GM12878 (cell line): ENCODE measurements at regions of chr15 and their contacts with region 1.

Region 1: DNA sequence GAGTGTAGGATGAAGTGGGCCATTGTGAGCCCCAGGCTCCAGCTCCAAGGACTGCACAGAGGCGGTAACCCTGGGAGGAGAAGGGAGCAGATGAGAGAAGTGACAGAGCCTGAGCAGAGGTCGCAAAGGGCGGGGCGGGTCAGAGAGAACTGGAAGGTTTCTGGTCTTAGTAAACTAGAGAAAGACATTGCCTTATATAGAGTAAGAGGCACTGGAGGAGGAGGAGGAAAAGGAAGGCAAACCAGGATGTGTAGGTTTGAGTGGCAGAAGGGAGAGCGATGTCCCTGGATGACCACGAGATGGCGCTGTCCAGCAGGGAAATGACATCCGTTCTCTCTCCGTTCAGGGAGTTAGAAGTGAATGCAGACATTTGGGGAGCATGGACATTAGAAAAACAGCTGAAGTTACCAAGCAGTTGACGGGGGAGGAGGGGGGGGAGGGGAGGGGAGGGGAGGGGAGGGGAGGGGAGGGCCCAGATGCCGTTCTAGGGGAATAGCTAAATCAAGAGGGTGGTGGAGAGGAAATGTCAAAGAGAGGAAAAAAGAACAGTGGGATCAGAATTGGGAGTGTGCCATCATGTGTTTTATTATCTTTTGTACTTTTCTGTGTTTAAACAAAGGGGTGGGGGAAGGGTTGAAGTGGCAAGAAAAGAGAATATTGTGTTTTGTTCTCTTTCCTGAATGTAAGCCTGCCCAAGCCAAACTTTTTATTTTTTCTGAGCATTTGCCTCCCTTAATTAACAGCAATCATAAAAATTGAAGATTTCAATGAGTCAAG is 48.8 kb downstream of the STARD5 start:
- DNase-seq: peak; percentile 82
- ATAC-seq: peak; percentile 99
- H3K4me3 ChIP-seq: no peak overlapping the region
- H3K27ac ChIP-seq: no peak overlapping the region
- H3K4me1 ChIP-seq: 0 out of 2 replicates have a peak, but pooled peaks cover 3% of the 10 kb centered on the region
- H3K27me3 ChIP-seq: no peaks in the 10 kb centered on the region
- CTCF ChIP-seq: peak; percentile 89 to 95 (median 90)
- EP300 ChIP-seq: no peak
- POLR2A ChIP-seq: no peak
- RAD21 ChIP-seq: peak; percentile 100

Region 2: GRCh38 chr15:81286621-81287121 is 11.6 kb after region 1 on chr15:
- CTCF ChIA-PET with region 1: interaction called, 66 read pairs
- POLR2A ChIA-PET with region 1: interaction called, 10 read pairs
- RAD21 ChIA-PET with region 1: interaction called, 73 read pairs
- SMC1A ChIA-PET with region 1: interaction called, 109 read pairs
- in situ Hi-C with region 1: no loop called
- intact Hi-C with region 1: no loop called
- DNase-seq: no peak
- ATAC-seq: peak; percentile 33
- H3K4me3 ChIP-seq: no peak overlapping the region
- H3K27ac ChIP-seq: peak overlapping the region; percentile 29; the same call in 1 of the 2 replicates
- H3K4me1 ChIP-seq: peaks cover 38% of the 10 kb centered on the region
- H3K27me3 ChIP-seq: no peaks in the 10 kb centered on the region
- CTCF ChIP-seq: no peak
- EP300 ChIP-seq: no peak
- POLR2A ChIP-seq: no peak
- RAD21 ChIP-seq: no peak

Region 3: GRCh38 chr15:81311752-81312464 is 36.8 kb after region 1 on chr15:
- CTCF ChIA-PET with region 1: interaction called, 15 read pairs
- POLR2A ChIA-PET with region 1: no interaction called
- RAD21 ChIA-PET with region 1: interaction called, 15 read pairs
- SMC1A ChIA-PET with region 1: interaction called, 12 read pairs
- in situ Hi-C with region 1: no loop called
- intact Hi-C with region 1: no loop called
- DNase-seq: no peak
- ATAC-seq: peak; percentile 74
- H3K4me3 ChIP-seq: no peak overlapping the region
- H3K27ac ChIP-seq: peak overlapping the region; percentile 61
- H3K4me1 ChIP-seq: peaks cover 36% of the 10 kb centered on the region
- H3K27me3 ChIP-seq: no peaks in the 10 kb centered on the region
- CTCF ChIP-seq: no peak
- EP300 ChIP-seq: no peak
- POLR2A ChIP-seq: no peak
- RAD21 ChIP-seq: no peak

Region 4: DNA sequence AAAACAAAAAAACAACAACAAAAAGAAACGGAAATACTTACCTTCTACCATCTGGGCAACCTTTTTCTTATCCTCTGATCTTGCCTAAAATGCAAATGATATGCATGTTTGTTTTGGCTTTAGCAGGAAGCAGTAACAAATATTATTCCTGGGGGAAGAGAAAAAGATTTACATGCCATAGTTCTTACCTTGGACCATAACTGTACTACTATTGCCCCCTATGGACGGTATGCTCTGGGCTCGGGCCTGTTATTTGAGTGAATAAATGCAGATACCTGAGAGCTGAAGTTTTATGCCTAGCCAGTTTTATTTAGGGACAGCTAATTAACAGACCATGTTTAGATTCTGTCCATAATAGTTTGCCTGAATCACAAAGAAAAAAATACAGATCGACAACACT is 61.4 kb after region 1 on chr15:
- CTCF ChIA-PET with region 1: interaction called, 242 read pairs
- POLR2A ChIA-PET with region 1: interaction called, 4 read pairs
- RAD21 ChIA-PET with region 1: interaction called, 137 read pairs
- SMC1A ChIA-PET with region 1: interaction called, 122 read pairs
- in situ Hi-C with region 1: no loop called
- intact Hi-C with region 1: loop called (anchors 1 kb)
- DNase-seq: no peak
- ATAC-seq: peak; percentile 89
- H3K4me3 ChIP-seq: no peak overlapping the region
- H3K27ac ChIP-seq: no peak overlapping the region
- H3K4me1 ChIP-seq: no peaks in the 10 kb centered on the region; the same call in 1 of the 2 replicates
- H3K27me3 ChIP-seq: no peaks in the 10 kb centered on the region
- CTCF ChIP-seq: peak; percentile 57 to 73 (median 66); a peak in 5 of 6 replicates
- EP300 ChIP-seq: no peak
- POLR2A ChIP-seq: no peak
- RAD21 ChIP-seq: peak; percentile 83

Region 5: GRCh38 chr15:81400640-81401236 is 125.6 kb after region 1 on chr15:
- CTCF ChIA-PET with region 1: interaction called, 70 read pairs
- POLR2A ChIA-PET with region 1: no interaction called
- RAD21 ChIA-PET with region 1: interaction called, 32 read pairs
- SMC1A ChIA-PET with region 1: interaction called, 63 read pairs
- in situ Hi-C with region 1: no loop called
- intact Hi-C with region 1: loop called (anchors 1 kb)
- DNase-seq: peak; percentile 23
- ATAC-seq: peak; percentile 73
- H3K4me3 ChIP-seq: no peak overlapping the region
- H3K27ac ChIP-seq: no peak overlapping the region
- H3K4me1 ChIP-seq: no peaks in the 10 kb centered on the region
- H3K27me3 ChIP-seq: no peaks in the 10 kb centered on the region; a peak in 1 of 4 replicates
- CTCF ChIP-seq: peak; percentile 70 to 77 (median 73)
- EP300 ChIP-seq: no peak
- POLR2A ChIP-seq: no peak
- RAD21 ChIP-seq: peak; percentile 91

Region 6: DNA sequence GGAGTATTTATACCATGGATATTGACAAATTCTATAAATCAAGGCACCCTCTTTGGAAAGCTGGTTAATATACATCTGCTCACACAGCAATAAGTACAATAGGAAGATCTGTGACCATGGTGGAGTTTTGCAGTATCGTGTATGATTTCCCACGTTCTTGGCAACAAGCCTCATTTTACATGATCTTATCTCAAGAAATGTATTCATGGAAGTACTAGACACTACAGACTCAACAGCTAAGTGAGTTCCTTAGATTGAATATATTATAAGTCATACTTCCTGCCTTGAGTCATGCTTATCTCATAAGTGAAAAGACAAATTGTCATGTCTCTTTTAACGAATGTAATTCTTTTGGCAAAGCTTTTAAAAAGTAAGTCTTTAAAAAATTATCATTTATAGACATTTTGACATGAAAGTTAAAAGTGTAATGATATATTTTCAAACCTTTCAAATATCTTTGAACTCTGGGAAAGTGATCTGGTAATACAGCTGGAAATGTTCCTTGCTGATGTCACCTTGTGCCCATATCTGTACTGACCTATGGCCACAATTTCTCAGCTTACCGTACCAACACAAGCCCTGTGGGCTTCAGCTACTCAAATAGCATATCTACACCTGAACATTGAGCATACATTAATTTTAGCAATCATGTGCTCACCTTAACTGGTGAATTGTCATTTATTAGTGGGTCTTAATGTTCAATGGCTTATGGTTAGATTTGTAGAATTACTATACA is 229.2 kb after region 1 on chr15:
- CTCF ChIA-PET with region 1: no interaction called
- POLR2A ChIA-PET with region 1: no interaction called
- RAD21 ChIA-PET with region 1: no interaction called
- SMC1A ChIA-PET with region 1: no interaction called
- in situ Hi-C with region 1: no loop called
- intact Hi-C with region 1: no loop called
- DNase-seq: no peak
- ATAC-seq: no peak
- H3K4me3 ChIP-seq: no peak overlapping the region
- H3K27ac ChIP-seq: no peak overlapping the region
- H3K4me1 ChIP-seq: no peaks in the 10 kb centered on the region
- H3K27me3 ChIP-seq: no peaks in the 10 kb centered on the region
- CTCF ChIP-seq: no peak
- EP300 ChIP-seq: no peak
- POLR2A ChIP-seq: no peak
- RAD21 ChIP-seq: no peak

Region 7: DNA sequence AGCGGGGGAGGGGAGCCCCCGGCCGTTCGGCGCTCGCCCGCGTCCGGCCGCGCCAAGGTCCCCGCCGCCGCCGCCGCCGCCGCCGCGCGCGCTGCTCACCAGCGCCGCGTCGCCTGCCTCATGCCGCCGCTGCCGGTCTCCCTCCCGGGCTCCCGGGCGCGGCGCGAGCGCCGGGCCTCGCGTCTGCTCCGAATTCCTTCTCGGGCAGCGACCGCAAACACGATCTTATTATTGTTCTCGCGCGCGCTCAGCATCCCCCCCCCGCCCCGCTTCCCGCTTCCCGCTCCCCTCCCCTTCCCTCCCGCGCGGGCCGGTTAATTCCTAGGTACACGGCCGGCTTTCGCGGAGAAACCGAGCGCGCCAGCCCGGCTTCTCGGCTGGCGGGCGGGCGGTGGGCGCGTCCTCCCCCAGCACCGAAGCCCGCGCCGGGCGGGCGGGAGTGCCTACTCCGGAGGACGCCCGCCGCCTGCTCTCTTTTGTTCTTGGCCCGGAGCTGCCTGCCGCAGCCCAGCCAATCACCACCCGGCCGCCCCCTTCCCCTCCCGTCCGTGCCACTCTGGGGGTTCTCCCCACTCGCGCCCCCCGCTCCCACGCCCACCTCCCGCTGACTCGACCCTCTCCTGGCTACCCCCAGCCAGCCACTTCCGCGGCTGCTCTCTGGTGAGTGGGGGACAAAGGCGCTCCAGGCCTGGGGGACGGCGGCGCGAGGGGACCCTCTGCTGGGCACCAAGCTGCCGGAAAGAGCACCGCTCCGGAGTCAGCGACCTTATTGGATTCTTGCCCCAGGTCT is 1932.7 kb after region 1 on chr15 and contains the start of gene HDGFL3:
- CTCF ChIA-PET with region 1: no interaction called
- POLR2A ChIA-PET with region 1: no interaction called
- RAD21 ChIA-PET with region 1: no interaction called
- SMC1A ChIA-PET with region 1: no interaction called
- in situ Hi-C with region 1: loop called (anchors 25 kb)
- intact Hi-C with region 1: no loop called
- DNase-seq: no peak
- ATAC-seq: peak; percentile 64
- H3K4me3 ChIP-seq: peak within 1 kb of the TSS; percentile 94
- H3K27ac ChIP-seq: peak within 1 kb of the TSS; percentile 80
- H3K4me1 ChIP-seq: peaks cover 6% of the 10 kb centered on the region; the same call in 1 of the 2 replicates
- H3K27me3 ChIP-seq: no peaks in the 10 kb centered on the region
- CTCF ChIP-seq: peak; percentile 44 to 49 (median 46); a peak in 5 of 6 replicates
- EP300 ChIP-seq: no peak
- POLR2A ChIP-seq: peak; percentile 79
- RAD21 ChIP-seq: peak; percentile 53
- polyA plus RNA-seq, gene HDGFL3: 5.6 to 6.6 TPM